Activated naive CD4-positive, alpha-beta T cell treated with anti-CD3 and anti-CD28 coated beads for 36 hours (primary cell): ENCODE measurements at regions of chr3 and their contacts with region 1.

Region 1: GRCh38 chr3:107676469-107677309 is 153.9 kb downstream of the BBX start:
- DNase-seq: no peak
- H3K4me3 Mint-ChIP-seq: no peak overlapping the region
- H3K27ac Mint-ChIP-seq: no peak overlapping the region
- H3K4me1 Mint-ChIP-seq: peaks cover 32% of the 10 kb centered on the region
- H3K27me3 Mint-ChIP-seq: no peaks in the 10 kb centered on the region

Region 2: DNA sequence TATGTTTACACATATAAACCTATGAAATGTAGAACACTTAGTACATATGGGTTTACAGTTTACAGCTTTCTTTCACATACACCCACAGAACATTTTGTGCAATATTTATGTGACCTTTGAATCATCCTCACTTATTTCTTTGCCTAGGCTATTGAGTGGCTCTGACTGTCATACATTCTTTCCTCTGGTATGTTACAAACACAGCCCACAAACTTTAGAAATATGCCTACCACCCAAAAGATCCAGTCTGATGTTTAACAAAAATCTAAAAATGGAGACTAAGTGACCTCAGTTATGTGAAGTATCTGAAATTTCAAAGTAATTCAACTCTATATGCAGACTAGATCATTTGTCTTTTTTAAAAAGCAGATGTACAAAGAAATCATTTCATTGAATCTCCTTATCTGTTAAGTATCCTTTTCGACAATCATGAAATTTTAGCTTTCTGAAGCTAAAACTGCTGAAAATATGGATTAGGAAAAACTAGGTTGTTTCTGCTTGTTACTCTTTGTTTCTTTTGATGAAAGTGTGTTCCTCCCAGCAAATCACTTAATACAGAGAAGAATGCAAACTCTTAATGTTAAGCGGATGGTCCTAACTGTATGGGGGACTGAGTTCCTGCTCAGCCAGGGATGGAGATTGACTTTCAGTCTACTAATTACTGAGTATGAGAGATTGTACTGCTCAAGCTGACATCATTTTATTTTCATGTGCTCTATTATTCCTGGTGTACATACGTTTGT is 271.8 kb before region 1 on chr3:
- CTCF ChIA-PET with region 1: no interaction called
- intact Hi-C with region 1: no loop called
- DNase-seq: no peak
- H3K4me3 Mint-ChIP-seq: no peak overlapping the region
- H3K27ac Mint-ChIP-seq: no peak overlapping the region
- H3K4me1 Mint-ChIP-seq: no peaks in the 10 kb centered on the region
- H3K27me3 Mint-ChIP-seq: no peaks in the 10 kb centered on the region

Region 3: DNA sequence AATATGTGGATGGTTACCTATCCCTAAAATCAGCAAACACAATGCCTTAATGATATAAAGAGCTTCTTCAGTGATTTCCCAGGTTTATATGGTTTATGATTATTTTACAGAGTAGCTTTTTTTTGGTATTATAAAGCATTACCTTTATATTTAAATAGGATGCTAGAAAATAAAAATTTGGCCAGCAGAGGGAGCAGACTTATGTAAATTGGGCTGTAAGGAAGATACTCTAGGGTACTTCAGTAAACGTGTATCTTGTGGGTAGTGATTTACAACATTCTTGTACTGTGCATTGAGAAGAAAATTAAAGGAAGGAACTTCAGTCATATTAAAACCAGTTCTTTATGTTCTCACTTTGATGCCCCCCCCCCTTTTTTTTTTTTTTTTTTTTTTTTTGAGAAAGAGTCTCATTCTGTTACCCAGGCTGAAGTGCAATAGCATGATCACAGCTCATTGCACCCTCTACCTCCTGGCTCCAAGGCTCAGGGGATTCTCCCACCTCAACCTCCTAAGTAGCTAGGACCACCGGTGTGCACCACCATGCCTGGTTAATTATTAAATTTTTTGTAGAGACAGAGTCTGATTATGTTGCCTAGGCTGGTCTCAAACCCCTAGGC is 13.9 kb after region 1 on chr3:
- CTCF ChIA-PET with region 1: interaction called, 37 read pairs
- intact Hi-C with region 1: no loop called
- DNase-seq: no peak
- H3K4me3 Mint-ChIP-seq: no peak overlapping the region
- H3K27ac Mint-ChIP-seq: no peak overlapping the region
- H3K4me1 Mint-ChIP-seq: peaks cover 20% of the 10 kb centered on the region
- H3K27me3 Mint-ChIP-seq: no peaks in the 10 kb centered on the region

Region 4: DNA sequence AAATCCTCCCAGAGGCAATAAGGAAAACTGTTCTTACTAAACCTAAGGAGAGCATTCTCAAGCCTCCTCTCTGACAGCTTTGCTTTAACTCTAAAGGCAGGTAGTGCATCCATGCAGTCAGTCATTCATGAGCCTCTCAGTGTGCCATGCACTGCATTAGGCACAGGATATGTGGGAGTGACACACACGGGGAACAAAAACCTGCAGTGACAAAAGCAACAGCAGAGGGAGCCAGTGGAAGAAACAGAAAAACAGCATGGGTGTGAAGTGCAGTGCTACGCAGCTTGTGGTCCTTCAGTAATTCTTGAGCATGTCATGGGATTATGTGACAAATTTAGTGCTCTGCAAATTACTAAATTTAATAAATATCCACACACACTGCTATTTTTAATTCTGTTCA is 76.8 kb after region 1 on chr3:
- CTCF ChIA-PET with region 1: interaction called, 6 read pairs
- intact Hi-C with region 1: loop called (anchors 1 kb)
- DNase-seq: peak; percentile 37
- H3K4me3 Mint-ChIP-seq: no peak overlapping the region
- H3K27ac Mint-ChIP-seq: no peak overlapping the region
- H3K4me1 Mint-ChIP-seq: no peaks in the 10 kb centered on the region
- H3K27me3 Mint-ChIP-seq: no peaks in the 10 kb centered on the region

Region 5: DNA sequence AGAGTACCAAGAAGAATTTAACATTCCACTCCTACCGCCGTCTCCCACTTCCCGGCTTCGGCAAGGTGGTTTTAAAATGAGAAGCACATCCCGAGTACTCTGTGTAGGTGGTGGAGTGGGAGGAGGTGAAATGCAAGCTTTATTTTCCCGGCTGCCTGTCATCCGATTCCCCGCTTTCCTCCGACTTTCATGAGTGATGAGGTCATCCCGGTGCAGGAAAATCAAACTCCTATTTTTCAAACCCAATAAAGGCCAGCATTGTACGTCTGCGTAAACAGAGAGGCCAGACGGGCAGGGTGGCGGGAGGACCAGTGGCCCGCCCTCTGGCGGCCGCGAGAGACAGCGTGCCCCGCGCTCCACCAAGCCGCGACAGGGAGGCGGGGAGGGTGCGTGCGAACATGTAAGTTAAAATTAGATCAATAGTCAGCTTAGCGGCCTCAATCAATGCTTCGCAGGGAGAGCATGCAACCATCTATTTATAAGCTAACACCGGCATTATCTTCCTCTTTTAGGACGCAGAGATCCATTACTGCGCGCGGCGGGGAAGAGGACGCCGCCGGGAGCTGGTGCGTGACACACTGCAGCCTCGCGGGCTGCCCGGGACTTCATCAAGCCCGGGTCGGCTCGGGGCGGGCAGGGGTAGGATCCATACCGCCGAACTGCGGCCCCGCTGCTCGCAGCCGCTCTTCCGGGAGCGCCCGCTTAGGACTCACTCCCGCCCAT is 250.8 kb after region 1 on chr3:
- CTCF ChIA-PET with region 1: interaction called, 10 read pairs
- intact Hi-C with region 1: loop called (anchors 5 kb)
- DNase-seq: peak; percentile 74
- H3K4me3 Mint-ChIP-seq: peak overlapping the region; percentile 70
- H3K27ac Mint-ChIP-seq: no peak overlapping the region
- H3K4me1 Mint-ChIP-seq: peaks cover 7% of the 10 kb centered on the region
- H3K27me3 Mint-ChIP-seq: peaks cover 11% of the 10 kb centered on the region

Region 6: DNA sequence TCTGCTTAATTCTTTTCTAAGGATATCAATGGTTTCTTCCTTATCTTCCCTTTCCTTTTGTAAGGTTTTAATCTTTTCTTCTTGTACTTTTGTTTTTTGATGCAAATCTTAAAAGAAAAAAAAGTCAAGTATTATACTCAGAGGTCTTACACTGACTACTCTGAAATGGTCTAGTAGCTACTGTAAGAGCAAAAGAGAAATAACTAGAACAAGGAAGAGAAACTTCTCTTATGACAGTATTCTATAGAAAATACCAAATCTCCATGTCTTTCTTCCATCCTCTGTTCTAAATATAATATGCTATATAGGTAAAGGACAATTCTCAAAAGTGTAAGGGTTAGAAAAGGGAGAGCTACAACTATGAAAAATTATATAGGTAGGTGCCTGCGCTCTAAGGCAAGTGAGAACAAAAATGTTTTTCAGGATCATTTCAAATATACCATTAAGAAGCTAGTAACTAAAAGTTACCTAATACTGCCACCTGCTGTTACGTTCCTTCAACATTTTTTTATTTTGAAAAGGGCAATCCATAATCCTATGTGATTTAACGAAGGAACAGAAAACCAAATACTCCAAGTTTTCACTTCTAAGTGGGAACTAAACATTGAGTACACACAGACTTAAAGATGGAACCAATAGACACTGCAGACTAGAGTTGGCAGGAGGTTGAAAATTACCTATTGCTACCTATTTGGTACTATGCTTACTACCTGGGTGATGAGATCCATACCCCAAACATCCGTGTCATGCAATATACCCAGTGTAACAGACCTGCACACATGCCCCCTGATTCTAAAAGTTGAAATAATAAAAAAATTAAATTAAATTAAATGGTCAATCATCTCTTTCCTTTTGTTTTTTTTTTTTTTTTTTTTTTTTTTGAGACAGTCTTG is 875.8 kb after region 1 on chr3:
- CTCF ChIA-PET with region 1: no interaction called
- intact Hi-C with region 1: loop called (anchors 10 kb)
- DNase-seq: no peak
- H3K4me3 Mint-ChIP-seq: no peak overlapping the region
- H3K27ac Mint-ChIP-seq: no peak overlapping the region
- H3K4me1 Mint-ChIP-seq: peaks cover 2% of the 10 kb centered on the region
- H3K27me3 Mint-ChIP-seq: no peaks in the 10 kb centered on the region